ENCODE measurements at regions of chr14 and their contacts with region 1.

Region 1: DNA sequence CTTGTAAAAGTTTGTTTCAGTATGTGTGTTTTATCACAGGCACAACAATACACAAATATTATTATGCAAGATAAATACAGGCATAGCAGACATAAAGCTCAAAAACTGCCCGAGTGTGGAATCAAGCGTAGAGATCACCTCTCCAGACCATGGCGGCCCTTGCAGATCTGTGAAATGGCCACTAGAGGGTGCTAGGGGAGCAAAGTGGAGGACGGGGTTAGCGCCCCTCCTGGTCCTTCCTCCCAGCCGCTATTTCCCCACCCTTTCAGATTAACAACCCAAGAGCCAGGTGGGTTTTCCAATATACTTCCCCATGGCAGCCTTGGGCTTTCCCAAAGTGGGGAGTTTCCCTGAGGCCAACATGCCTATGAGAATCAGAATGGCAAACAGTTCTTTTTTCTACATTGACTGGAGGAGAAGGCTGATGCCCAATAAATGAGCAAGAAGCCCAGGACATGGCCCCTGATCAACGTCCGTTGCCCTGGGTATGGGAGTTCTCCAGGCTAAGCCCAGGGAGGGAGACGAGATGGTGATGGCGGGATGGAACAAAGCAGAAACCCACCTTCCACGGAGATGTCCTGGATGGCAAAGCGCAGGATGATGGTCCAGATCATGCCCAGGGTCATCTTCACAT is 67.4 kb downstream of the ACTN1 start:
- DNase-seq: peak; percentile 92
- H3K4me3 Mint-ChIP-seq: no peak overlapping the region
- H3K27ac Mint-ChIP-seq: no peak overlapping the region
- H3K4me1 Mint-ChIP-seq: peaks cover 41% of the 10 kb centered on the region
- H3K27me3 Mint-ChIP-seq: no peaks in the 10 kb centered on the region

Region 2: DNA sequence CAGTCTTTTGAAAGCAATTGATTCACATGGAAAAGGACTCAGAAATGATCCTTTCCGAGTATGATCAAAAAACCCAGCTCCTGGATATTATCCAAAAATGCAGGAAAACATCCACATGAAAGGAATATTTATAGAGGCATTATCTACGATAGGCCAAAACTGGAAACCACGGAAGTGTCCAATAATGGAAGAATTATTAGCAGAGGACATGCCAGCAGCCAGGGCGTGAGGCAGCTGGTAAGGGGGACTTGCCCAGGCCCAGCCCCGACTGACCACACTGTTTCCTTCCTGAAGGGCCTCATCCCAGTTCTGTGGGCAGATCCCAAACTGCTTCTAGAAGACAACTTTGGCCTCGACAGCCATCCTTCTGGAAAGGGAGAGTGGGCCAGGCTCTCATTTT is 46.8 kb after region 1 on chr14:
- CTCF ChIA-PET with region 1: interaction called, 11 read pairs
- intact Hi-C with region 1: no loop called
- DNase-seq: no peak
- H3K4me3 Mint-ChIP-seq: no peak overlapping the region
- H3K27ac Mint-ChIP-seq: no peak overlapping the region
- H3K4me1 Mint-ChIP-seq: peaks cover 86% of the 10 kb centered on the region
- H3K27me3 Mint-ChIP-seq: no peaks in the 10 kb centered on the region

Region 3: GRCh38 chr14:68987653-68988036 is 75.9 kb after region 1 on chr14:
- CTCF ChIA-PET with region 1: interaction called, 15 read pairs
- intact Hi-C with region 1: loop called (anchors 1 kb)
- DNase-seq: no peak
- H3K4me3 Mint-ChIP-seq: no peak overlapping the region
- H3K27ac Mint-ChIP-seq: no peak overlapping the region
- H3K4me1 Mint-ChIP-seq: peaks cover 18% of the 10 kb centered on the region
- H3K27me3 Mint-ChIP-seq: no peaks in the 10 kb centered on the region

Region 4: GRCh38 chr14:69055999-69056788 is 144.5 kb after region 1 on chr14:
- CTCF ChIA-PET with region 1: interaction called, 15 read pairs
- intact Hi-C with region 1: loop called (anchors 2 kb)
- DNase-seq: peak; percentile 59
- H3K4me3 Mint-ChIP-seq: no peak overlapping the region
- H3K27ac Mint-ChIP-seq: peak overlapping the region; percentile 62
- H3K4me1 Mint-ChIP-seq: peaks cover 18% of the 10 kb centered on the region
- H3K27me3 Mint-ChIP-seq: no peaks in the 10 kb centered on the region

Region 5: GRCh38 chr14:69101331-69101826 is 189.7 kb after region 1 on chr14:
- CTCF ChIA-PET with region 1: interaction called, 13 read pairs
- intact Hi-C with region 1: loop called (anchors 1 kb)
- DNase-seq: peak; percentile 47
- H3K4me3 Mint-ChIP-seq: no peak overlapping the region
- H3K27ac Mint-ChIP-seq: peak overlapping the region; percentile 61
- H3K4me1 Mint-ChIP-seq: peaks cover 26% of the 10 kb centered on the region
- H3K27me3 Mint-ChIP-seq: no peaks in the 10 kb centered on the region

Region 6: GRCh38 chr14:69231462-69231861 is 319.8 kb after region 1 on chr14:
- CTCF ChIA-PET with region 1: no interaction called
- intact Hi-C with region 1: no loop called
- DNase-seq: no peak
- H3K4me3 Mint-ChIP-seq: no peak overlapping the region
- H3K27ac Mint-ChIP-seq: no peak overlapping the region
- H3K4me1 Mint-ChIP-seq: no peaks in the 10 kb centered on the region
- H3K27me3 Mint-ChIP-seq: no peaks in the 10 kb centered on the region